ENCODE measurements at regions of chr15 and their contacts with region 1.

Region 1: DNA sequence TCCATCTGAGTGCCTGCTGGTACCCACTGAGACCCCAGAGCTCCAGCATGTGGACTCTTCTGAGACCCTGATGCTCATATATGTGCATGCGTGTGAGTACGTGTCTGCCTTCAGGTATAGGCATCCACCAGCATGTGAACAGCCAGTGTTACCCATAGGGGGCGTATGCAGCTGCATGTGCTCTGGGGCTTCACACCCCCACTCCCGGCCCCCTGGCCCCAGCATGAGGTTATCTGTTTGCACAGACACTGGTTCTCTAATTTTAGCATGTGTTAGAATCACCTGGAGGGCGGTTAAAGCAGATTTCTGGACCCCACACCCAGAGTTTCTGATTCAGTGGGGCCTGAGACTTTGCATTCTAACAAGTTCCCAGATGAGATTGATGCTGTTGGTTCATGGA is 824 bp upstream of the CILP start:
- DNase-seq: no peak
- ATAC-seq: no peak
- H3K4me3 ChIP-seq: no peak overlapping the region
- H3K27ac ChIP-seq: peak overlapping the region in 6 of 12 donors; percentile 4 to 62 (median 48)
- H3K4me1 ChIP-seq: peaks cover 0 to 48% (median 6%) of the 10 kb centered on the region in 12 donors
- H3K27me3 ChIP-seq: no peaks in the 10 kb centered on the region
- CTCF ChIP-seq: peak in 7 of 12 donors; percentile 12 to 38 (median 21)
- POLR2A ChIP-seq: no peak

Region 2: DNA sequence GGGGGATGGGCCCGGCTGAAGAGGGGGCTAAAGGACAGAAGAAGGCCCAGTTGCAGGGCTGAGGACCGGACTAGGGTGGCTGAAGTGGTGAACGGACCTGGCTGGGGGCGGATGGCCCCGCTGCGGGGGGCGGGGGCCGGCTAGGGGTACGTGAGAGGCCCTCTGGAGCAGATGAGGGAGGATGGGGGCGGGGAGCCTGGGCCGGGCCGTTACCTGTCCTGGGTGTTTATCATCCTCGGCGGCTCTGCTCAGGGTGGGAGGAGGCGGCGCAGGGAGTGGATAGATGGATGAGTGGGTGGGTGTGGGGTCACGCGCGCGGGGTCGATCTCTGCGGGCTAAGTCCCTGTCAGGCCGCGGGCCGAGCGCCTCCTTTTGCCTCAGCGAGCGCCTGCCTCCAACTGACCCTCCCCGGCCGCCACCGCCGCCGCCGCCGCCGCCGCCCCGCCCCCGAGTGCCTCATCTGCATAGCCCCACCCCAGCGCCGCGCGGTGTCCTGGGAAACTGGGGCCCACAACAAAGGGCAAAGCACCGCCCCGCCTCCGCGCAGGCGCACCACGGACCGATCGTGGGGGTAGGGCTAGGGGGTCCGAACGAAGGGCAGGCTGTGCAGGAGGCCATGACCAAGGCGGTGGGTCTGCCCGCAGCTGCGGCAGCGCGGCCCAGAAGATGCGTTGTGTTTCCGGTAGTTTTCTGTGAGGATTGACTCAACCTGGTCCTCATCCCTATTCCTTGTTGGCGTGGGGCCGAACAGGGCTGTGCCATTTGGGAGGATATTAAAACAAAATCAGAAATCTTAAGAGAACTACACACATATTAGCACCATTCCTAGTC is 509.1 kb before region 1 on chr15:
- intact Hi-C with region 1: no loop called
- DNase-seq: peak; percentile 97 to 100 (median 99)
- ATAC-seq: peak; percentile 94 to 97 (median 95)
- H3K4me3 ChIP-seq: peak overlapping the region; percentile 64 to 99 (median 92)
- H3K27ac ChIP-seq: peak overlapping the region; percentile 49 to 95 (median 86)
- H3K4me1 ChIP-seq: peaks cover 13 to 55% (median 46%) of the 10 kb centered on the region in 12 donors
- H3K27me3 ChIP-seq: no peaks in the 10 kb centered on the region
- CTCF ChIP-seq: peak in 1 of 12 donors; percentile 7
- POLR2A ChIP-seq: peak in 1 of 2 donors; percentile 66

Region 3: DNA sequence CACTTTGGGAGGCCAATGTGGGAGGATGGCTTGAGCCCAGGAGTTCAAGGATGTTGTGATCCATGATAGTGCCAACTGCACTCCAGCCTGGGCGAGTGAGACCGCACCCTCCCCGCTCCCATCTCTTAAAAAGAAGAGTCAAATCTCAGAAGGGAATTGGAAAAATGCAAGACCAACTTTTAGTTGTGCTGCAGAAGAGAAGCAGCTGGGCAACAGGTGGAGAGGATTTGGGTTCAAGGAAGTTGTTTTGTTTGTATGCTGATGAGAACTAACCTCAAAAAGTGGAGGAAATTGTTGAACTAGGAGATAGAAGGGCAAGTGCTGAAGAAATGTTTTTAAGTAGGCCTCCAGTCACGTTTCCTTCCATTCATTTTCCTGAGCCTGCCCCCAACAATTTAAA is 65.7 kb before region 1 on chr15:
- intact Hi-C with region 1: no loop called
- DNase-seq: no peak
- ATAC-seq: no peak
- H3K4me3 ChIP-seq: no peak overlapping the region
- H3K27ac ChIP-seq: no peak overlapping the region
- H3K4me1 ChIP-seq: no peaks in the 10 kb centered on the region
- H3K27me3 ChIP-seq: no peaks in the 10 kb centered on the region
- CTCF ChIP-seq: no peak
- POLR2A ChIP-seq: no peak

Region 4: GRCh38 chr15:65222891-65223290 is 10.8 kb after region 1 on chr15:
- intact Hi-C with region 1: no loop called
- DNase-seq: no peak
- ATAC-seq: no peak
- H3K4me3 ChIP-seq: no peak overlapping the region
- H3K27ac ChIP-seq: no peak overlapping the region
- H3K4me1 ChIP-seq: no peaks in the 10 kb centered on the region
- H3K27me3 ChIP-seq: no peaks in the 10 kb centered on the region
- CTCF ChIP-seq: no peak
- POLR2A ChIP-seq: no peak

Region 5: DNA sequence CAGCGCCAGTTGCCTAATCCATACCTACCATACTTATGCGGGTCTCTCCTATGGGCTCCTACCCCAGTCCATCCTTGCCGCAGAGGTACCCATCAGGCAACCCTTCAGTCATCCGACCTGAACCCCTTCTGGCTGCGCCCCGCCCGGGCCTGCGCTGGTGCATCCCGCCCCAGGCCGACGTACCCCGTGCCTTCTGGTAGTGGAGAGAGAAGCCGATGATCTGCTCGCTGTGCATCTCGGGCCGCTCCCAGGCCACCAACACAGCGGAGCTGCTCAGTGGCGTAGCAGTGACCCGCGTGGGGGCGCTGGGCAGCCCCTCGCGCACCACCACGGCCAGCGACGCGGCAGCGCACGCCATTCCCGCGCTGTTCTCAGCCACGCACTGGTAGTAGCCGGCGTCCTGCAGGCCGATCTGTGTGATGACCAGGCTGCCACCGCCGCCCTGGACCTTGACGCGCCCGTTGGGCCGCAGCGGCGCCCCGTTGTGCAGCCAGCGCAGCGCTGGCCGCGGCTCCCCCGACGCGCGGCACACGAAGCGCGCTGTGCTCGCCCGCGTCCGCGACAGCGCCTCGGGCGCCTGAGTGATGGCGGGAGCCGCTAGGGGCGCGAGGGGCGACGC is 183.6 kb after region 1 on chr15:
- intact Hi-C with region 1: loop called in 1 of 10 experiments (anchors 10 kb)
- DNase-seq: no peak
- ATAC-seq: peak in 1 of 4 donors; percentile 15
- H3K4me3 ChIP-seq: peak overlapping the region in 4 of 12 donors; percentile 10 to 30 (median 24)
- H3K27ac ChIP-seq: no peak overlapping the region
- H3K4me1 ChIP-seq: peaks cover 0 to 26% (median 2%) of the 10 kb centered on the region in 12 donors
- H3K27me3 ChIP-seq: peaks cover 7 to 44% (median 29%) of the 10 kb centered on the region in 9 donors
- CTCF ChIP-seq: no peak
- POLR2A ChIP-seq: no peak

Region 6: DNA sequence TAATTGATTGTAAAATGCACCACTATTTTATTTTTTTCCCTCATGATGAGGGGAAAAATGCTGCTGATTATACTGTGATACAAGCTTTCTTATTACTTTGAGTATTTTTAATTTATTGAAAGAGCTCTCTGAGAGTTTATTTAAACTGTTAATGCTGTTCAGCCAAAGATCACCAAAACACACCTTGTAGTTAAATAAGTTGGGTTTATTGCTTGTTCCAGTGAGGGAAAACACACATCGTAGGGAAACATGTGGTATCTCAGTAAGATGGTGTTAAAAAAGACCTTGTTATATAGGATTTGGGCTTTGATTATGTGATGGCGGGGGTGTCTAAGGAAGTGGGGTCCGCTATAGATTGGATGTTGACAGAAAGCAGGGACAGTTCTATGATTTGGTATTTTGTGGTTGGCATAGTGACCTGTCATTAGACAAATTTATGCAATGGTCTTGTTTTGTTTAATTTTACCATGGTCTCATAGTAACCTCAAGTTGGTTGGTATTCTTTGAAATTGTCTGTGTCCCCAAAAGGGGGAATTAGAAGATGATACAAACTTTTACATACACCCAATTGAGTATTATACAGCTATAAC is 329.2 kb after region 1 on chr15:
- intact Hi-C with region 1: no loop called
- DNase-seq: no peak
- ATAC-seq: no peak
- H3K4me3 ChIP-seq: no peak overlapping the region
- H3K27ac ChIP-seq: no peak overlapping the region
- H3K4me1 ChIP-seq: no peaks in the 10 kb centered on the region
- H3K27me3 ChIP-seq: no peaks in the 10 kb centered on the region
- CTCF ChIP-seq: no peak
- POLR2A ChIP-seq: no peak